ENCODE measurements at regions of chr2 and their contacts with region 1.

Region 1: DNA sequence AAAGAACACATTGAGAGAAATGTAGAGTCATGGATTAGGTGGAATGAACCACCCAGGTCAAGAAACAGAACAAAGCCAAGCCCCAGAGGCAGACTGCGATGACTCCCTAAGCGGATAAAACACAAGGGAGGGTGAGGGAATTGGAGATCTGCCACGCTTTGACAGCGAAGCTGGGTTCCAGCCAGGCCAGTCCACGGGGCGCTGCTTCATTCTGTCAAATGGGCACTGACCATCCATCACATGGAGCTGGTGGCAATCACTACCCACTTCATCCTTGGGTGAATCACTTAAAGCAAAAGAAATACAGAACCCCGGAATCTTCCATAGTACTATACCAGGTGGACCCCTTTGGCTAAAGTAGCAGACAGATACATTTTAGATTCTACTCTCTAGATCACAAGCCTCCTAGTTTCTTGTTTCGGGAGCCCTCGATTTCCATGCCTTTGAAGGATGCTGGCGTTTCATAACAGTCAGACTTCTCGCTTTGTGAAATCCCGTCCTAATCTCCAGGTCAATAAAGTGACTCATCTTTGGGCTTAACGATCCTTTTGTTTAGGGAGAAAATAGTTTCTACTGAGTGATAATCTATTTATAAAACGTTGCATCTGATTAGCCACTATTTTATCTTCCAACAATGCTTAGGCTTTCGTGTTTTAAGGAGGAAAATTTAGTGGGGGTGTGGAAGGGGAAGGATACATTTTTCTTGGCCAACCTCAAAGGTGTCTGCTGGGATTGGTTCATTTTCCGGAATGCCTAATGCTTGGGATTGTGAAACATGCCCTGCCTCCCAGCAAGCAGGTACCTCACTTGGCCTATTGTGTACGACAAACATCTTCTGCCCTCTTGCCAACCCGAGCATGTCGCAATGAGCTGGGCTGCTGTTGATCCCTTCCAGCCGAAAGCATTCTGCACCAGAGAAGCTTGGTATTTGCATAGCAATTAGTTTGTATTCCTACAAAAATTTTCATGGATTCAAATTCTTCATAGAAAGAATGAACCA is 44.1 kb upstream of the HDAC4 start:
- DNase-seq: peak; percentile 51 to 96 (median 82)

Region 2: DNA sequence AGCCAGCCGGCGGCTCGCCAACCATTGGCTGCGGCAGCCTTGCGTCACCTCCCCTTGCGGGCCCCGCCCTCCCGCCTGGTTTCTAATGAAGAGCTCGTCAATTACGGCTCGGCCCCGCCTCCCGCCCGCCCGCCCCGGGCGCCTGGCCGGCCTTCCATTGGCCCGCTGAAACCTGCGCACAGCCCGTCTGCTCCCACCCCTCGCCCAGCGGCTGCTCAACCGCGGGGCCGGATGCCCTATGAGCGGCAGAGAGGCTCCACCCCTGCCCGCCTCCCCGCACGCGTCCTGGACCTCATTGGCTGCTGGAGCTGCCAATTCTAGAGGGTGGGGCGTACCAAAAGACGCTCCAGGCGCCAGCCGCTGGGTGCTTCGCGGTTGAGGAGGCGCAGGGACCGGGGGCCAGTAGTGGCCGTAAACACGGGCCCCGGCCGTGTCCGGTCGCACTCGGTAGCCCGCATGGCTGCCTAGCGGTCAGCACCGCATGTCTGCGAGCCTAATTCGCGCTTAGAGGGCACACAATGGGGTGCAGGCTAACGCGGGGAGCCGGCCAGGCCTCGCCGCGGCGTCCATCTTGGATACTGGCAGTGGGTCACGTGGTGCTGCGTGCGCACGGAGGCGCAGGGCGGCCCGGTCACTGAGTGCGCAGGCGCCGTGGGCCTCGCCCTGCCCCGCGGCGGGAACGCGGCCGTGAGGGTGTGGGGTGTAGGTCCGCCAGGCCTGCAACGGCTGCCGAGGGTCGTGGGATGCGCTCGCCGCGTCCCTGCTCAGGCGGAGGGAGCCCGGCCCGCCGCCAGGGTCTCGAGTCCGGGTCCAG is 43.7 kb before region 1 on chr2:
- intact Hi-C with region 1: loop called (anchors 2 kb)
- DNase-seq: peak; percentile 98 to 100 (median 100)

Region 3: GRCh38 chr2:239602290-239603282 is 157.7 kb after region 1 on chr2:
- intact Hi-C with region 1: no loop called
- DNase-seq: peak in 6 of 42 donors; percentile 2 to 31 (median 14)